ENCODE measurements at regions of chr10 and their contacts with region 1.

Region 1: GRCh38 chr10:75401569-75402485 is at the start of gene ZNF503:
- DNase-seq: peak; percentile 98
- ATAC-seq: peak; percentile 80 to 83
- total RNA-seq, gene ZNF503: 12.0 to 14.3 TPM

Region 2: GRCh38 chr10:75651417-75651816 is 249.6 kb after region 1 on chr10:
- intact Hi-C with region 1: loop called in 1 of 2 experiments (anchors 10 kb)
- DNase-seq: no peak
- ATAC-seq: no peak

Region 3: DNA sequence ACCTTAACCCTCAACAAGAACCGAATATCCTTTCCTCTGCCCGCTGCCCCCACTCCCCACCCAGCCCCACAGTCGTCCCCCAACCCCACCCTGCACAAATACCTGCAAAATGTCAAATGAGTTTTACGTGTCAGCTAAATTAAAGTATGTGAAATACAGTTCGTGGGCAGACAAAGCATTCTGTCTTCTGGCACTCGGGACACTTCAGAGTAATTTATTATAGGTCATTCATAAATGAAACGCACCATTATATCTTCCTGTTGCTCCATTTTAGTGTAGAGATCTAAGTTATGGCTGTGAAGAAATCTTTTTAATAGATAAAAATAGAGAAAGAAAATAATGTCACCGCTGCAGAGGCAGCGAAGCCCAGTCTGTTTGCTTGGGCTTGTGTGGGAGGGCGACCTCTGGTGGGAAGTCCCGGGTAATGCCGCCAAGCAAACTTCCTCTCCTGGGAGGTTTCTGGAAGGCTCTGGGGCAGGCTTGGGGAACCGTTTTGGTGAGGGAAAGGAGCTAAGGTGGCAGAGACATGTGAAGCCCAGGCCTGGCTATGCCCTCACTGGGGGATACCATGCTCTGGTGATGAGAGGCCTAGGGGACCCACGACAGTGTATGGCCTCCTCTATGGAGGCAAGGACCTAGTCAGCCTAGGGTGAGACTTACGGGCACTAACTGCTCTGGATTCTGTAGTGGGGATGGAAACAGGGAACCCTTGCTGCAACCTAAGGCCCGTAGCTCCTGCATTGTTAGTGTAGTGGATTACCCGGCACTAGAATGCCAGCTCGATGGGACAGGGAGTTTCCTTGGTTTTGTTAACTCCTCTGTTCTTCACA is 634.5 kb after region 1 on chr10:
- intact Hi-C with region 1: loop called (anchors 5 kb)
- DNase-seq: peak; percentile 71
- ATAC-seq: peak; percentile 87 to 88

Region 4: GRCh38 chr10:76547352-76547972 is 1145.6 kb after region 1 on chr10:
- intact Hi-C with region 1: loop called in 1 of 2 experiments (anchors 5 kb)
- DNase-seq: peak; percentile 84
- ATAC-seq: peak; percentile 65 to 71

Region 5: GRCh38 chr10:77004917-77005564 is 1603.2 kb after region 1 on chr10:
- intact Hi-C with region 1: loop called in 1 of 2 experiments (anchors 5 kb)
- DNase-seq: no peak
- ATAC-seq: peak; percentile 57 to 71